ENCODE measurements at regions of chr11 and their contacts with region 1.

Region 1: DNA sequence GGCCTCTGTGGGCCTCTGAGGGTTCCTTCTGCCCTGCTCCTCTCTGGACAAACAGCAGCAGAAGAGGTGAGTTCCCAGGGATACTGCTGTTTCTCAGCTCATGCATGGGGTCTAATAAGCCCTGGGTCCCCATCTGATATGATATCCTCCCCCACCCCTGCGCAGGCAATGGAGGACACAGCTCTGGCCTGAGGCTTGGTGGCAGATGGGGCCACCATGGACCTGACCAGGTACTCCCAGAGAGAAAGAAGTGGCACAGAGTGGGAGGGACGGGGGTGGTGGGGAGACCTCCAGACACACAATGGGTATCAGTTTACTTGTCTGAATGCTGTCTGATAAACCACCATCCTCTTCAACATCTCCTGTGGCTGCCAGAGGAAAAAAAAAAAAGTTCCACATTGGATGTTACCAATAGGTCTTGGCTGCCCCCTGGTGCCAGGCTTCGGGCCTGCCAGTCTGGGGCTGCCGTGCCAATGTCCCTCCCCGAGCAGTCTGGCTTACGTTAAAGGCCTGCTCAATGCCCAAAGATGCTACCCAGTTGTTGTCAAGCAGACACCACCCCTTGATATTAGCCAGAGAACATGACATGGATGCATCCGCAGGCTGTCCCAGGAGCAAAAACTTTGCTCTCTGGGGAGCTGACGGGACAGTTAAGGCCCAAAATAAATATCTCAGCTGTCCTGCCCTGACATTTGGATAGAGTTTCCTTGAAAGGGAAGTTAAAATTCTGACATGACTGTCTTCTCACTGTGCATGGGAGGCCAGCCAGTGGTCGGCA is 27.9 kb upstream of the ABCC8 start:
- DNase-seq: peak; percentile 90
- H3K4me3 Mint-ChIP-seq: no peak overlapping the region
- H3K27ac Mint-ChIP-seq: no peak overlapping the region
- H3K4me1 Mint-ChIP-seq: peaks cover 13% of the 10 kb centered on the region
- H3K27me3 Mint-ChIP-seq: no peaks in the 10 kb centered on the region
- CTCF ChIP-seq: peak; percentile 85

Region 2: GRCh38 chr11:17230867-17231851 is 273.4 kb before region 1 on chr11:
- CTCF ChIA-PET with region 1: no interaction called
- intact Hi-C with region 1: loop called (anchors 10 kb)
- DNase-seq: no peak
- H3K4me3 Mint-ChIP-seq: no peak overlapping the region
- H3K27ac Mint-ChIP-seq: no peak overlapping the region
- H3K4me1 Mint-ChIP-seq: no peaks in the 10 kb centered on the region
- H3K27me3 Mint-ChIP-seq: no peaks in the 10 kb centered on the region
- CTCF ChIP-seq: no peak

Measured in Calu3 (cell line).